ENCODE measurements at regions of chr7 and their contacts with region 1.

Region 1: GRCh38 chr7:14457568-14458453 is 444.7 kb downstream of the DGKB start:
- DNase-seq: peak in 9 of 10 donors; percentile 35 to 80 (median 63)
- H3K4me3 ChIP-seq: peak overlapping the region in 21 of 59 donors; percentile 0 to 39 (median 15)
- H3K27ac ChIP-seq: no peak overlapping the region
- H3K27me3 ChIP-seq: no peaks in the 10 kb centered on the region
- CTCF ChIP-seq: peak; percentile 72 to 98 (median 88)

Region 2: GRCh38 chr7:13990984-13991790 is 466.6 kb before region 1 on chr7:
- intact Hi-C with region 1: loop called in 1 of 2 experiments (anchors 10 kb)
- DNase-seq: peak; percentile 73 to 94 (median 92)
- H3K4me3 ChIP-seq: peak overlapping the region; percentile 54 to 90 (median 76)
- H3K27ac ChIP-seq: peak overlapping the region in 56 of 59 donors; percentile 24 to 95 (median 80)
- H3K27me3 ChIP-seq: no peaks in the 10 kb centered on the region
- CTCF ChIP-seq: peak in 55 of 56 donors; percentile 24 to 74 (median 53)

Region 3: GRCh38 chr7:14207138-14207537 is 250.7 kb before region 1 on chr7:
- intact Hi-C with region 1: no loop called
- DNase-seq: no peak
- H3K4me3 ChIP-seq: no peak overlapping the region
- H3K27ac ChIP-seq: no peak overlapping the region
- H3K27me3 ChIP-seq: no peaks in the 10 kb centered on the region
- CTCF ChIP-seq: no peak

Region 4: DNA sequence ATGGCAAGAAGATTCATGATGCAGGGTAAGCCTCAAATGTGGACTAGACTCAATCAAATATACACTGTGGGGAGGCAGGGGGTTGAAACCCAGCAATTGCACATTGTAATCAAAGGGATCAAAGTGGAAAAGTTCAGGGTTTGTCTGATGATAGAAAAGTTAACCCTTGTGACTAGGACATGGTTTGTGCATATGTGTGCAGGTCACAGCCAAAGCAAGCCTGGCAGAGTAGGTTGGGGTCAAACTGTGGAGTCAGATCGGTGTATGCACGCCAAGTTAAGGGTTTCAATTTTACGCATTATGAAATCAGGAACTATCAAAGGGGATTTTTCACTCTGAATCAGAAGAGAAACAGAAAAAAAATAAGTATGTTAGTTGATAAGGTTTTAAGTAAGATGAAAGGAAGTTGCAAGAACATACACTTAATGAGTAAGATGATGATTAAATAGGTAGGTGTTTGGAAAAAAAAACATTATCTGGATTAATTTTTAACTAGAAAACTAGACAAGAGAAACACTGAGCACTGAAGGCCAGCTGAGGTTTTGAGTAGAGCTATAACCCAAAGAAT is 256.4 kb after region 1 on chr7:
- intact Hi-C with region 1: no loop called
- DNase-seq: no peak
- H3K4me3 ChIP-seq: no peak overlapping the region
- H3K27ac ChIP-seq: no peak overlapping the region
- H3K27me3 ChIP-seq: no peaks in the 10 kb centered on the region
- CTCF ChIP-seq: no peak